ENCODE measurements at regions of chr4 and their contacts with region 1.

Region 1: GRCh38 chr4:158671915-158672806 is at the start of gene ETFDH:
- DNase-seq: peak; percentile 98 to 99
- H3K4me3 ChIP-seq: peak within 1 kb of the TSS; percentile 80
- H3K4me3 Mint-ChIP-seq: peak within 1 kb of the TSS; percentile 100
- H3K27ac Mint-ChIP-seq: peak within 1 kb of the TSS; percentile 98
- H3K4me1 ChIP-seq: peaks cover 3% of the 10 kb centered on the region; the same call in 1 of the 2 replicates
- H3K4me1 Mint-ChIP-seq: peaks cover 7% of the 10 kb centered on the region
- H3K27me3 ChIP-seq: no peaks in the 10 kb centered on the region
- H3K27me3 Mint-ChIP-seq: no peaks in the 10 kb centered on the region
- CTCF ChIP-seq: peak; percentile 41 to 70
- total RNA-seq, gene ETFDH: 5.8 and 6.4 TPM in 2 replicates

Region 2: GRCh38 chr4:158535130-158535614 is 137.0 kb before region 1 on chr4:
- CTCF ChIA-PET with region 1: no interaction called
- POLR2A ChIA-PET with region 1: no interaction called
- intact Hi-C with region 1: no loop called
- DNase-seq: no peak
- H3K4me3 ChIP-seq: no peak overlapping the region
- H3K4me3 Mint-ChIP-seq: no peak overlapping the region
- H3K27ac Mint-ChIP-seq: no peak overlapping the region
- H3K4me1 ChIP-seq: no peaks in the 10 kb centered on the region
- H3K4me1 Mint-ChIP-seq: peaks cover 5% of the 10 kb centered on the region
- H3K27me3 ChIP-seq: no peaks in the 10 kb centered on the region
- H3K27me3 Mint-ChIP-seq: peaks cover 15% of the 10 kb centered on the region
- CTCF ChIP-seq: no peak

Region 3: GRCh38 chr4:158610790-158611189 is 61.4 kb before region 1 on chr4:
- CTCF ChIA-PET with region 1: no interaction called
- POLR2A ChIA-PET with region 1: no interaction called
- intact Hi-C with region 1: no loop called
- DNase-seq: no peak
- H3K4me3 ChIP-seq: no peak overlapping the region
- H3K4me3 Mint-ChIP-seq: no peak overlapping the region
- H3K27ac Mint-ChIP-seq: no peak overlapping the region
- H3K4me1 ChIP-seq: no peaks in the 10 kb centered on the region
- H3K4me1 Mint-ChIP-seq: peaks cover 7% of the 10 kb centered on the region
- H3K27me3 ChIP-seq: no peaks in the 10 kb centered on the region
- H3K27me3 Mint-ChIP-seq: peaks cover 7% of the 10 kb centered on the region
- CTCF ChIP-seq: no peak

Region 4: DNA sequence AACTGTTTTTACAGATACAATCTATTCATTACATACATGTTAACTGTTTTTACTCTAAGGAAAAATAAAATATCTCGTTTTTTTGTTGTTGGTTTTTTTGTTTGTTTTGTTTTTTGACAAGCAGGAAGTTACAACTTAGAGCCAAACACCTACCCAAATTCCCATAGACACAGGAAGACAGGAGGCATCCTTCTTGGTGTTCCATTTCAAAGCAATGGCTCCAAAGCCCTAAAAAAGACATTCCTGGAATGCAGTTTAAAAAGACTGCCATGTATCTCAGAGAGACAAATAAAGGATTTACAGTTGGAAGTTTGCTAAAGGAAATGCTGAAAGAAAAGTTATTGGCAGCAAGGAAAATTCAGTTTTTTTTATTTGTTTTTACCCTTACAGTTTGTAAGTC is 16.7 kb after region 1 on chr4:
- CTCF ChIA-PET with region 1: no interaction called
- POLR2A ChIA-PET with region 1: no interaction called
- intact Hi-C with region 1: no loop called
- DNase-seq: no peak
- H3K4me3 ChIP-seq: no peak overlapping the region
- H3K4me3 Mint-ChIP-seq: no peak overlapping the region
- H3K27ac Mint-ChIP-seq: no peak overlapping the region
- H3K4me1 ChIP-seq: no peaks in the 10 kb centered on the region
- H3K4me1 Mint-ChIP-seq: no peaks in the 10 kb centered on the region
- H3K27me3 ChIP-seq: no peaks in the 10 kb centered on the region
- H3K27me3 Mint-ChIP-seq: no peaks in the 10 kb centered on the region
- CTCF ChIP-seq: no peak

Region 5: GRCh38 chr4:158722917-158723793 is 51.0 kb after region 1 on chr4 and contains the start of gene PPID:
- CTCF ChIA-PET with region 1: no interaction called
- POLR2A ChIA-PET with region 1: no interaction called
- intact Hi-C with region 1: loop called (anchors 1 kb)
- DNase-seq: peak; percentile 85 to 88
- H3K4me3 ChIP-seq: peak within 1 kb of the TSS; percentile 68
- H3K4me3 Mint-ChIP-seq: peak within 1 kb of the TSS; percentile 90
- H3K27ac Mint-ChIP-seq: peak within 1 kb of the TSS; percentile 95
- H3K4me1 ChIP-seq: peaks cover 6% of the 10 kb centered on the region
- H3K4me1 Mint-ChIP-seq: peaks cover 9% of the 10 kb centered on the region
- H3K27me3 ChIP-seq: no peaks in the 10 kb centered on the region
- H3K27me3 Mint-ChIP-seq: no peaks in the 10 kb centered on the region
- CTCF ChIP-seq: no peak
- total RNA-seq, gene PPID: 50.9 and 57.2 TPM in 2 replicates

Region 6: DNA sequence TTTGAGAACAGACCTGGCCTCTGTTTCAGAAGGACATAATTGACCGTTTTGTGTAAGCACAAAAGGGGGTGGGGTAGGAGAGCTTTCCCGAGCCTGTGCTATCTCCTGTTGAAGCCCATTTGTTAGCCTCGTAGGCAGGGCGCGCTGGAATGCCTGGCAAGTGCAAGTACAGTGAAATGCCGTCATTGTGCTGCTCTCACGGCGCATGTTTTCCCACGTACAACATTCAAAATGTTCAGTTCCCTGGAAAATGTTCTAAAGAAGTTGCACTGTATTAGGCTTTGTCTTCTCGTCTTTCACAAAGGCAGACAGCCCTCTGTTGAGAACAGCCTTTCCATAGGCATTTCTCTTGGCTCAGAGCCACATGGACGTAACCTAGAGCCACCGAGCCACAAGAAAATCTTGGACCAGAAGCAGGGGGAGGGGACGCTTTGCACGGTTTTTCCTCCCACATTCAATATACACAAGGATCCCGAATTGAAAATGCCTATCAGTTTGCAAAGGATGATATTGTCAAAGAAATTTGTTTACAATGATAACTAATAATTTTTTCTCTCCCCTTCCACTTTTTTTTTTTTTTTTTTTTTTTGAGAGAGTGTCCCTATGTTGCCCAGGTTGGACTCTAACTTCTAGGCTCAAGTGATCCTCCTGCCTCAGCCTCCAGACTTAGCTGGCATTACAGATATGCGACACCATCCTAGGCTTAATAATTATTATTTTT is 376.2 kb after region 1 on chr4:
- CTCF ChIA-PET with region 1: no interaction called
- POLR2A ChIA-PET with region 1: no interaction called
- intact Hi-C with region 1: loop called (anchors 10 kb)
- DNase-seq: peak; percentile 51 to 59
- H3K4me3 ChIP-seq: peak overlapping the region; percentile 16; the same call in 1 of the 2 replicates
- H3K4me3 Mint-ChIP-seq: peak overlapping the region; percentile 40
- H3K27ac Mint-ChIP-seq: peak overlapping the region; percentile 68
- H3K4me1 ChIP-seq: peaks cover 23% of the 10 kb centered on the region
- H3K4me1 Mint-ChIP-seq: peaks cover 24% of the 10 kb centered on the region
- H3K27me3 ChIP-seq: no peaks in the 10 kb centered on the region
- H3K27me3 Mint-ChIP-seq: no peaks in the 10 kb centered on the region
- CTCF ChIP-seq: no peak